HEK293 (cell line): ENCODE measurements at regions of chr10 and their contacts with region 1.

Region 1: GRCh38 chr10:105974803-105975456 is 1189.6 kb downstream of the SORCS1 start:
- H3K4me3 ChIP-seq: no peak overlapping the region
- H3K27ac ChIP-seq: no peak overlapping the region
- H3K4me1 ChIP-seq: no peaks in the 10 kb centered on the region
- CTCF ChIP-seq: no peak

Region 2: DNA sequence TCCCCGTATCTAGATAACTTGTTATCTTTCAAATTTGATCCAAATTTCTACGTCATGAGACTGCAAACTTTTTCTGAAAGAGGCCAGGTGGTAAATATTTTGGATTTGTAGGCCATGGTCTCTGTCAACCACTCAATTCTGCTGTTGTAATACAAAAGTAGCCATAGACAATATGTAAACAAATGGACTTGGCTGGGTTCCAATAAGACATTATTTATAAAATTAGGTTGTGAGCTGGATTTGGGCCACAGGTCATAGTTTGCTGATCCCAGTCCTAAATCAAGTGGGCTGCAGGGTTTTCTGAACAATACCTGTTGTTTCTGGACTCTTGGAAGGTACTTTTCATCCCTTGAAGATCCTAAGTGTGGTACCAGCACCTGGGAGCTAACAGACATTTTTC is 11.6 kb after region 1 on chr10:
- CTCF ChIA-PET with region 1: interaction called, 17 read pairs
- POLR2A ChIA-PET with region 1: no interaction called
- H3K4me3 ChIP-seq: no peak overlapping the region
- H3K27ac ChIP-seq: no peak overlapping the region
- H3K4me1 ChIP-seq: no peaks in the 10 kb centered on the region
- CTCF ChIP-seq: no peak